GM12878 (cell line): ENCODE measurements at regions of chr12 and their contacts with region 1.

Region 1: DNA sequence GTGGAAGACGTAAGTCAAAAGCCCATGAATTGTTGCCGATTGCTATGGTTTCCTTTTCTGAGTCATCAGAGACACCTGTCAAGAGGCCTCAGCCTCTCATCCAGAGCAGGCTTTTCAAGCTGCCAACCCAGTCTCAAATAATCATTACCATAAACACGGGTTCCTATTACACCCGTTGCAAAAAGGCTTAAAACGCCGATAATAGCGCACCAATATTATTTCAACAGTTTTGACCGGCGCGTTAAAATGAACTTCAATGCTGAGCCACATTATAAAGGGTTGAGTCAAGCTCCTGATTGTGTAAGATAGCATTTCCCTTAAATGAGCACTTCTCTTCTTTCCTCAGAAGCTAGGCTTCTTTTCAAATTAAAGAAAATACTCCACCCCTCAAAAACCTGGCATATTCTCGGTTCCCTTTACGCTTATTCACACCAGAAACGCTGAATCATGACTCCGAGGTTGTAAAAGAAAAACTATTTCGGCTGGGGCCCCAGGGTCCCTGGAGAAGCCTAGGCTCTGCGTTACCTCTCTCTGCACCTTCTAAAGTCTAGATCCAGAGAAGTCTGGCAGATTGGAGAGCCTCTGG is 1.4 kb downstream of the TMTC1 start:
- DNase-seq: no peak
- ATAC-seq: peak; percentile 80
- H3K4me3 ChIP-seq: peak overlapping the region; percentile 50
- H3K27ac ChIP-seq: no peak overlapping the region
- H3K4me1 ChIP-seq: no peaks in the 10 kb centered on the region
- H3K27me3 ChIP-seq: no peaks in the 10 kb centered on the region
- CTCF ChIP-seq: no peak
- EP300 ChIP-seq: peak in 1 of 2 experiments; percentile 29; a peak in 1 of 4 replicates
- POLR2A ChIP-seq: no peak
- RAD21 ChIP-seq: no peak

Region 2: DNA sequence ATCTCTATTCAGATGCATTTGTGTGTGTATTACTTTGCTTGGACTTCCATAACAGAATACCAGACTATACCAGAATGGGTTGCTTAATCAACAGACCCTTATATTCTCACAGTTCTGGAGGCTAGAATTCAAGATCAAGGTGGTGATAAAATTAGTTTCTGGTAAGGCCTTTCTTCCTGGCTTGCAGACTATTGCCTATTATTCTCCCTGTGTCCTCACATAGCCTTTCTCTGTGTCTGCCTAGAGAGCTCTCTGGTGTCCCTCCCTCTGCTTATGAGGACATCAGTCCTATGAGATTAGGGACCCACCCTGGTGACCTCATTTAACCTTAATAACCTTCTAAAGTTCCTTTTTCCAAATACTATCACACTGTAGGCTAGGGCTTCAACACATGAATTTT is 527.3 kb before region 1 on chr12:
- CTCF ChIA-PET with region 1: no interaction called
- POLR2A ChIA-PET with region 1: no interaction called
- RAD21 ChIA-PET with region 1: no interaction called
- SMC1A ChIA-PET with region 1: no interaction called
- in situ Hi-C with region 1: no loop called
- intact Hi-C with region 1: no loop called
- DNase-seq: no peak
- ATAC-seq: no peak
- H3K4me3 ChIP-seq: no peak overlapping the region
- H3K27ac ChIP-seq: no peak overlapping the region
- H3K4me1 ChIP-seq: no peaks in the 10 kb centered on the region
- H3K27me3 ChIP-seq: no peaks in the 10 kb centered on the region
- CTCF ChIP-seq: no peak
- EP300 ChIP-seq: no peak
- POLR2A ChIP-seq: no peak
- RAD21 ChIP-seq: no peak

Region 3: DNA sequence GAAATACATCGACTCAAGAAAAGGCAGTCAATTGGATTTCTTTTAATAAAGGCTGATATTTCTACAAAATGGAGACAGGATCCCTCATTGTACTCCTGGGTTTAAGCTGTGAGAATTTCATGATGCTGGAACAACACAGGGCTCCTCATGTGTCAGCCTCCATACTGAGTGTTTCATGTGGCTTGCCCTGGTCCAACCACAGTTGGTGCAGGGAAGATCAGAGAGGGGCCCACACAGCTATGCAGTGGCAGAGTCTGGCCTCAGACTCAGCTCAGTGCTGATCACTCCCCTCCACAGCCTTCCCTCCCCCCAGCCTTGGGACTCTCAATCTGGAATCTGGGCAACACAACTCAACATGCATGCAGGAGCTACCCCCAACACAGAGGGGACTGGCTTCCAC is 162.3 kb before region 1 on chr12:
- CTCF ChIA-PET with region 1: interaction called, 3 read pairs
- POLR2A ChIA-PET with region 1: interaction called, 3 read pairs
- RAD21 ChIA-PET with region 1: interaction called, 4 read pairs
- SMC1A ChIA-PET with region 1: interaction called, 21 read pairs
- in situ Hi-C with region 1: no loop called
- intact Hi-C with region 1: no loop called
- DNase-seq: no peak
- ATAC-seq: peak; percentile 44
- H3K4me3 ChIP-seq: no peak overlapping the region
- H3K27ac ChIP-seq: no peak overlapping the region
- H3K4me1 ChIP-seq: no peaks in the 10 kb centered on the region
- H3K27me3 ChIP-seq: no peaks in the 10 kb centered on the region
- CTCF ChIP-seq: no peak
- EP300 ChIP-seq: no peak
- POLR2A ChIP-seq: no peak
- RAD21 ChIP-seq: no peak

Region 4: DNA sequence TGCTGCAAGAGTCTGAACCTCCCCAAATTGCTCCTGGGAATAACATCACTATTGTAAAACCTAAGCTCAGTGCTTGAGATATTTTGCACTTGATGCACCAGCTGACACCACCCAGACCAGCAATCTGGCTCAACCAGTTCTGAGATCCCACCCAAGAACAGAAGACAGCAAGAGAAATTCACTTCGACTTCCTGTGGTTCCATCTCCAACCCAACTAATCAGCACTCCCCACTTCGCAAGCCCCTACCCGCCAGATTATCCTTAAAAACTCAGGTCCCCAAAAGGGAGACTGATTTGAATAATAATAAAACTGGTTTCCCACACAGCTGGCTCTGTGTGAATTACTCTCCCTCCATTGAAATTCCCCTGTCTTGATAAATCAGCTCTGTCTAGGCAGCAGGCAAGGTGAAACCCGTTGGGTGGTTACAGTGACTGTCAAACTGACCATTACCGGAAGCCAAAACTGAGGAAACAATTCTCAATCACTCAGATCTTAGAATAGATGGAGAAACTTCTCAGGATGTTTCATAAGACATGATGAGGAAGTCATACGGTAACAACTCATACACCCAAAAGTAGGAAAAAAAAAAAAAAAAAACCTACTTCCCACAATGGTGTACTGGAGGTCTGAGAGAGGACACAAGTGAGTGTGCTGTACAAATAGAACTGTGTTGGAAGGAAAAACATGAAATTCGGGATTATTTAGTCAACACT is 91.1 kb before region 1 on chr12:
- CTCF ChIA-PET with region 1: interaction called, 3 read pairs
- POLR2A ChIA-PET with region 1: interaction called, 4 read pairs
- RAD21 ChIA-PET with region 1: interaction called, 17 read pairs
- SMC1A ChIA-PET with region 1: interaction called, 13 read pairs
- in situ Hi-C with region 1: no loop called
- intact Hi-C with region 1: loop called (anchors 5 kb)
- DNase-seq: peak; percentile 52
- ATAC-seq: peak; percentile 86
- H3K4me3 ChIP-seq: no peak overlapping the region
- H3K27ac ChIP-seq: no peak overlapping the region
- H3K4me1 ChIP-seq: no peaks in the 10 kb centered on the region
- H3K27me3 ChIP-seq: no peaks in the 10 kb centered on the region
- CTCF ChIP-seq: no peak
- EP300 ChIP-seq: peak in 1 of 2 experiments; percentile 18; a peak in 1 of 4 replicates
- POLR2A ChIP-seq: no peak
- RAD21 ChIP-seq: no peak

Region 5: GRCh38 chr12:29733060-29733459 is 49.3 kb before region 1 on chr12:
- CTCF ChIA-PET with region 1: no interaction called
- POLR2A ChIA-PET with region 1: interaction called, 3 read pairs
- RAD21 ChIA-PET with region 1: interaction called, 3 read pairs
- SMC1A ChIA-PET with region 1: interaction called, 12 read pairs
- in situ Hi-C with region 1: no loop called
- intact Hi-C with region 1: no loop called
- DNase-seq: no peak
- ATAC-seq: peak; percentile 34; the same call in 1 of the 3 replicates
- H3K4me3 ChIP-seq: no peak overlapping the region
- H3K27ac ChIP-seq: no peak overlapping the region
- H3K4me1 ChIP-seq: no peaks in the 10 kb centered on the region
- H3K27me3 ChIP-seq: no peaks in the 10 kb centered on the region
- CTCF ChIP-seq: no peak
- EP300 ChIP-seq: no peak
- POLR2A ChIP-seq: no peak
- RAD21 ChIP-seq: no peak

Region 6: GRCh38 chr12:29743801-29744200 is 38.6 kb before region 1 on chr12:
- CTCF ChIA-PET with region 1: interaction called, 5 read pairs
- POLR2A ChIA-PET with region 1: interaction called, 3 read pairs
- RAD21 ChIA-PET with region 1: interaction called, 8 read pairs
- SMC1A ChIA-PET with region 1: interaction called, 21 read pairs
- in situ Hi-C with region 1: no loop called
- intact Hi-C with region 1: no loop called
- DNase-seq: no peak
- ATAC-seq: peak; percentile 31; the same call in 2 of the 3 replicates
- H3K4me3 ChIP-seq: no peak overlapping the region
- H3K27ac ChIP-seq: no peak overlapping the region
- H3K4me1 ChIP-seq: no peaks in the 10 kb centered on the region
- H3K27me3 ChIP-seq: no peaks in the 10 kb centered on the region
- CTCF ChIP-seq: no peak
- EP300 ChIP-seq: no peak
- POLR2A ChIP-seq: no peak
- RAD21 ChIP-seq: no peak

Region 7: DNA sequence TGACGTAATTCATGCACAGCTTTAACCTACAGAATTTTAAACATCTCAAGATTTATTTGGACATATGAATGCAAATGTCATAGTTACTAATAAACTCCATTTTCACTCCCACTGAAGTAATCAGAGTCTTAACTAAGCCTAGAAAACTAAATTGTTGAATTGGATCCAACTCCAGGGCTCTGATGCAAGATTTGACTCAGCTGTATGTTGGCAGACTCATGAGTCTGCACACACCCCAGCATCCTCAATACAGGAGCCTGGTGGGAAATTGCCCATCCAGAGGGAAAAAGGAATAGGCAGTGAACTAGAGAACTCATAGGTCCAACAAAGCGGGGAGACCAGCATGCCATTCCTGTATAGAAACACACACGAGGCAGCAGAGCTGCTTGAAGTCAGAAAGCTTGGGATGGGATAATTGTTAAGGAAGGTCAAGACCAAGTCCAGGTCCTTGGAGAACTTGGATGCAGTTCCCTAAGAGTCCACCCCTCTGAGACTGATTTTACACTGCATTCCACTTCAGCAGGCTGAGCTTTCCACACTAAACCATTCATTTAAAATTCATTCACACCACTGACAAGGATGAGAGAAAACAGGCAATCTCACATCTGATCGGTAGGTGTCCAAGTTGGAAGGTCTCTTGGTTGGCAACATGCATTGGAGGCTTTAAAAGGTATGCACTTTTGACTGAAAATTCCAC is 13.1 kb before region 1 on chr12:
- CTCF ChIA-PET with region 1: interaction called, 6 read pairs
- POLR2A ChIA-PET with region 1: interaction called, 5 read pairs
- RAD21 ChIA-PET with region 1: interaction called, 10 read pairs
- SMC1A ChIA-PET with region 1: interaction called, 87 read pairs
- in situ Hi-C with region 1: no loop called
- intact Hi-C with region 1: no loop called
- DNase-seq: no peak
- ATAC-seq: no peak
- H3K4me3 ChIP-seq: no peak overlapping the region
- H3K27ac ChIP-seq: no peak overlapping the region
- H3K4me1 ChIP-seq: no peaks in the 10 kb centered on the region
- H3K27me3 ChIP-seq: no peaks in the 10 kb centered on the region
- CTCF ChIP-seq: no peak
- EP300 ChIP-seq: no peak
- POLR2A ChIP-seq: no peak
- RAD21 ChIP-seq: no peak

Region 8: DNA sequence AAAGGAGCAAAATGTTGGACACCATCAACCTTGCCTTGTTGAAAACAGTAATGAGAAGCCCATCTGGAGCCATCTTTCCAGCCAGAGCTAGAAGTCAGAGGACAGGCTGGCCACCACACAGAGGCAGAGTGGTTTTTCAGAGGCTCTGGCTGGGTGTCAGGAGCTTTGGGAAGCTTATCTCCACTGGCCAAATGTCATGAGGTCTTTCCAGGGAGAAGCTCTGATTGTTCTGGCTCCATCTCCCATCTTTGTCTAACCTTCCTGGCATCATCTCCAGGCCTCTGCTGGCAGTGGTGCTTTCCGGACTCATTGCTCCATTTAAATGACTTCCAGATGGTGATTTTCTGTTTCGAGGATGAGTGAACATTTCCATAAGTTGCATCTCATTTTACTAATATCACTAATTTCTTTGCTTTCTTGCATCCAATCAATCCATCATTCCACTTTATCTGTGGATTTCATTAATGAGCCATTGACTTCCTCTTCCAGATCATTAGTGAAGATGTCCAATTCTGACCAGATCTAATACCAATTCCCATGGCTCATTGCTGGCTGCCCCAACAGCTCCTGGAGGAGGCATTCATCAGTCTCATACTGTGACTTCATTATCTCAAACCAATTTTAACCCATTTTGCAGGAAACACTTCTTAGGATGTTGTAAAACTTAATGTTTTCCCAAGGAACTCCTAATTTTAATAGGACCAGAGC is 36.7 kb after region 1 on chr12:
- CTCF ChIA-PET with region 1: no interaction called
- POLR2A ChIA-PET with region 1: no interaction called
- RAD21 ChIA-PET with region 1: no interaction called
- SMC1A ChIA-PET with region 1: no interaction called
- in situ Hi-C with region 1: no loop called
- intact Hi-C with region 1: no loop called
- DNase-seq: no peak
- ATAC-seq: no peak
- H3K4me3 ChIP-seq: no peak overlapping the region
- H3K27ac ChIP-seq: no peak overlapping the region
- H3K4me1 ChIP-seq: no peaks in the 10 kb centered on the region
- H3K27me3 ChIP-seq: no peaks in the 10 kb centered on the region
- CTCF ChIP-seq: no peak
- EP300 ChIP-seq: no peak
- POLR2A ChIP-seq: no peak
- RAD21 ChIP-seq: no peak